Colonic mucosa (tissue), 4 donors: ENCODE measurements at regions of chrX and their contacts with region 1.

Region 1: GRCh38 chrX:138128027-138128671 is 562.2 kb downstream of the ZIC3 start:
- DNase-seq: peak; percentile 19
- H3K4me3 ChIP-seq: no peak overlapping the region
- H3K27ac ChIP-seq: no peak overlapping the region
- H3K4me1 ChIP-seq: no peaks in the 10 kb centered on the region
- H3K27me3 ChIP-seq: no peaks in the 10 kb centered on the region
- CTCF ChIP-seq: peak; percentile 38

Region 2: DNA sequence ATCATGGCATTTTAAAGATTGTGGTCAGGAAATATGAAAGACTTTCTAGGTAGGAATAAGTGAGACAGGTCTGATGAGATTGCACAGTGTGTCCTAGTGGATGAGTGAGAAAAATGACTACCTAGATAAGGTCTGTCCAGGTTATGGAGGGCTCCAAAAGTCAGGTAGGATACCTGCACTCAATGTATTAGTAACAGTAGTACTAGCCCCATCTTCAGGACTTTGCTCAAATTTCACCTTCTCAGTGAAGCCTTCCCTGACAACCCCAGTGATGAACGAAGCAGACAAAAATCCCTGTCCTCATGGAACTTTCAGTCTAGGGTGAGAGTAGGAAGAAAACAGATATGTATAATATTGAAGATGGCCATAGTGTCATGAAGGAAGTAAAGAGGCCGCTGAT is 476.5 kb before region 1 on chrX:
- intact Hi-C with region 1: no loop called
- DNase-seq: no peak
- H3K4me3 ChIP-seq: no peak overlapping the region
- H3K27ac ChIP-seq: no peak overlapping the region
- H3K4me1 ChIP-seq: no peaks in the 10 kb centered on the region
- H3K27me3 ChIP-seq: no peaks in the 10 kb centered on the region
- CTCF ChIP-seq: no peak

Region 3: DNA sequence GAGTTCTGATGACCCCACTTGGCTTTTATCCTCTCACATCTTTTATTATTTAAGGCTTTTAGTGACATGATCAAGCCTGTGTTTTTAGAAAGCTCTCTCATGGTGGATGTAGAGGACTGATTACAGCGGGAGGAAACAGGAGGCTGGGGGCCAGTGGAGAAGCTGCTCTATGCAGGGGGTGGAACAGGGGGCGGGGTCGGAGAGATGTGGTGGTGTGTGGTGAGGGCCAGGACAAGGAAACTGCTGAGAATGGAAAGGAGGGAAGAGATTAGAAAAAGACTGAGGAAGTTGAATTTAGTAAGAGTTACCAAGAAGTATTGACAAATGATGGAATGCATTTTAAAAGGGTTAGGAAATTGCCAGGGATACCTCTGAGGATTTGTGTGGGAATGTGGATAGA is 270.0 kb before region 1 on chrX:
- intact Hi-C with region 1: no loop called
- DNase-seq: no peak
- H3K4me3 ChIP-seq: no peak overlapping the region
- H3K27ac ChIP-seq: no peak overlapping the region
- H3K4me1 ChIP-seq: no peaks in the 10 kb centered on the region
- H3K27me3 ChIP-seq: no peaks in the 10 kb centered on the region
- CTCF ChIP-seq: no peak

Region 4: GRCh38 chrX:138745196-138745595 is 617.0 kb after region 1 on chrX:
- intact Hi-C with region 1: loop called (anchors 5 kb)
- DNase-seq: peak; percentile 36
- H3K4me3 ChIP-seq: no peak overlapping the region
- H3K27ac ChIP-seq: no peak overlapping the region
- H3K4me1 ChIP-seq: no peaks in the 10 kb centered on the region
- H3K27me3 ChIP-seq: no peaks in the 10 kb centered on the region
- CTCF ChIP-seq: peak; percentile 74